ENCODE measurements at regions of chr10 and their contacts with region 1.

Region 1: GRCh38 chr10:13371897-13372470 is 23.9 kb upstream of the SEPHS1 start:
- DNase-seq: peak; percentile 92
- H3K4me3 ChIP-seq: no peak overlapping the region
- H3K27ac ChIP-seq: no peak overlapping the region
- H3K4me1 ChIP-seq: no peaks in the 10 kb centered on the region
- H3K27me3 ChIP-seq: peaks cover 10% of the 10 kb centered on the region
- CTCF ChIP-seq: peak; percentile 96

Region 2: GRCh38 chr10:13440185-13441061 is 68.4 kb after region 1 on chr10:
- CTCF ChIA-PET with region 1: interaction called, 25 read pairs
- POLR2A ChIA-PET with region 1: no interaction called
- intact Hi-C with region 1: loop called (anchors 1 kb)
- DNase-seq: peak; percentile 69
- H3K4me3 ChIP-seq: peak overlapping the region; percentile 45
- H3K27ac ChIP-seq: no peak overlapping the region
- H3K4me1 ChIP-seq: peaks cover 9% of the 10 kb centered on the region
- H3K27me3 ChIP-seq: peaks cover 16% of the 10 kb centered on the region
- CTCF ChIP-seq: peak; percentile 94

Region 3: GRCh38 chr10:13475124-13475523 is 103.1 kb after region 1 on chr10:
- CTCF ChIA-PET with region 1: no interaction called
- POLR2A ChIA-PET with region 1: no interaction called
- intact Hi-C with region 1: no loop called
- DNase-seq: no peak
- H3K4me3 ChIP-seq: no peak overlapping the region
- H3K27ac ChIP-seq: no peak overlapping the region
- H3K4me1 ChIP-seq: no peaks in the 10 kb centered on the region
- H3K27me3 ChIP-seq: no peaks in the 10 kb centered on the region
- CTCF ChIP-seq: no peak

Region 4: GRCh38 chr10:13536674-13537366 is 164.8 kb after region 1 on chr10:
- CTCF ChIA-PET with region 1: interaction called, 15 read pairs
- POLR2A ChIA-PET with region 1: interaction called, 4 read pairs
- intact Hi-C with region 1: loop called (anchors 1 kb)
- DNase-seq: peak; percentile 77
- H3K4me3 ChIP-seq: no peak overlapping the region
- H3K27ac ChIP-seq: no peak overlapping the region
- H3K4me1 ChIP-seq: no peaks in the 10 kb centered on the region
- H3K27me3 ChIP-seq: peaks cover 19% of the 10 kb centered on the region
- CTCF ChIP-seq: peak; percentile 80

Region 5: DNA sequence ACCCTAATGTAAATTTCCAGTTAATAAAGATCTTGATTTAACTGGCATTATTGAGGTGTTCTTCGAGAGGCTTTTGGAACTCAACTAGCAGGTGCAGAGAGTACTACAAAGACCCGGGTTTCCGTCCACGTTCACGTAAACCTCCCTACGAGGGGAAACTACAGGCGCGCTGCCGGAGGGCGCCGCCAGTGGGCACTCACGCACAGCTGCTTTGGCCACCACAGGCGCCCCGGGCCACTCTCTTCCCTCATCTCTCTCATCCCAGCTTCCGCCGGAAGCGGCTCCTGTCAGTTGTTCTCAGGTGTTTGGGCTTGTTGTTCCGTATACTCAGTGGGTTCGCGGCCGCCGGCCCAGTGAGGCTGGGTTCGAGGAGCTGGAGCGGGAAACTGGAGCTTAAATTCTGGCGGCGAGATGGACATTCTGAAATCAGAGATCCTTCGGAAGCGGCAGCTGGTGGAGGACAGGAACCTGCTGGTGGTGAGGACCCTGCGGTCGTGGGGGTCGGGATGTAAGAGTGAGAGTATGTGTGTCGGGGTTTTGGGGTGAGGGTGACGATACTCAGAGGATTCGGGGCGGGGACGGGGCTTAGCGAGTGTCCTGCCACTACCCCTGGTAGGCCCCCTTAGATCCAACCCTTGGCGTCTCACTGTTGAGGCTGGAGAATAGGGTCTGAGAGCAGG is 214.8 kb after region 1 on chr10 and contains the start of gene PRPF18:
- CTCF ChIA-PET with region 1: interaction called, 5 read pairs
- POLR2A ChIA-PET with region 1: no interaction called
- intact Hi-C with region 1: loop called (anchors 1 kb)
- DNase-seq: peak; percentile 96
- H3K4me3 ChIP-seq: peak within 1 kb of the TSS; percentile 69
- H3K27ac ChIP-seq: no peak within 1 kb of the TSS
- H3K4me1 ChIP-seq: no peaks in the 10 kb centered on the region
- H3K27me3 ChIP-seq: peaks cover 22% of the 10 kb centered on the region
- CTCF ChIP-seq: peak; percentile 98
- total RNA-seq, gene PRPF18: 21.9 and 22.9 TPM in 2 replicates

Region 6: DNA sequence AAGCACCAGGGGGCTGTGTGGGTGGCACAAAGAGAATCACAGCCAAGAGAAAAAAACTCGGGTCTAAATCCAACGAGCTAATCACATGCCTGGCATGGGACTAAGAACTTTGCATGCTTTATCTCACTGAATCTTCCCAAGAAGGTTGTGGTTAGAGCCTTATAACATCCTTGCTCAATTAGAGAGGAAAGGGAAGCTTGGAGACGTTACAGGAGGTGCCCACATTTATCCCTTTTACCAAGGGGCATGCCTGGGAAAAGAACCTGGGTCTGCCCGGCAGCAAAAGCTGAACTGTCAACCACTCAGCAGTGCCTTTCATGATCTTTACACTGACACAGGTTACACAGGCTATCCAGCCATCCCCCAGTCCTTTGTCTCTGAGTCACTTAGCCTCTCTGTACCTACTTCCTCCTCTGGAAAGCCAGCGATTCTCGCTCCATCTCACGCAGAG is 404.9 kb after region 1 on chr10:
- CTCF ChIA-PET with region 1: interaction called, 5 read pairs
- POLR2A ChIA-PET with region 1: no interaction called
- intact Hi-C with region 1: loop called (anchors 5 kb)
- DNase-seq: peak; percentile 72
- H3K4me3 ChIP-seq: no peak overlapping the region
- H3K27ac ChIP-seq: no peak overlapping the region
- H3K4me1 ChIP-seq: peaks cover 5% of the 10 kb centered on the region
- H3K27me3 ChIP-seq: no peaks in the 10 kb centered on the region
- CTCF ChIP-seq: no peak